K562 (cell line): ENCODE measurements at regions of chr9 and their contacts with region 1.

Region 1: DNA sequence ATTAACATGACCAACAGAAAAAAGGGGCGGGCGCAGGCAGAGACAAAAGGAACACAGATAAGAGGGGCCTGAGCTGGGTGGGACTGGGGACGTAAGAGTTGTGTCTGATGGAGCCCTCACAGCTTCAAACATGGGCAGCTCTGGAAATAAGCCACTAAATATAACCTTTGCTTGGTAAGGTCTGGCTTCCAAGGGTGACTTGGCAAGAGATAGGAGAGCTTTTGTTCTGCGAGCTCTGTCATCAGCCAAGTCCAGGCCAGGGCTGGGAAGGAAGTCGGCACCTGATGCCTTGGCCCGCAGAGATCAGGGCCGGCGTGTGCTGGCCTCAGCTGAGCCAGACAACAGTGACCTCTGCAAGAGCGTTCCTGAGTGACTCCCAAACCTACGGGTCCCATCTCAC is 11.8 kb downstream of the TRUB2 start:
- DNase-seq: no peak
- ATAC-seq: no peak
- H3K4me3 ChIP-seq: no peak overlapping the region
- H3K27ac ChIP-seq: peak overlapping the region; percentile 13; the same call in 2 of the 3 replicates
- H3K4me1 ChIP-seq: peaks cover 28 to 30% of the 10 kb centered on the region in 2 experiments
- H3K27me3 ChIP-seq: no peaks in the 10 kb centered on the region
- CTCF ChIP-seq: no peak
- EP300 ChIP-seq: no peak
- POLR2A ChIP-seq: no peak
- RAD21 ChIP-seq: no peak

Region 2: DNA sequence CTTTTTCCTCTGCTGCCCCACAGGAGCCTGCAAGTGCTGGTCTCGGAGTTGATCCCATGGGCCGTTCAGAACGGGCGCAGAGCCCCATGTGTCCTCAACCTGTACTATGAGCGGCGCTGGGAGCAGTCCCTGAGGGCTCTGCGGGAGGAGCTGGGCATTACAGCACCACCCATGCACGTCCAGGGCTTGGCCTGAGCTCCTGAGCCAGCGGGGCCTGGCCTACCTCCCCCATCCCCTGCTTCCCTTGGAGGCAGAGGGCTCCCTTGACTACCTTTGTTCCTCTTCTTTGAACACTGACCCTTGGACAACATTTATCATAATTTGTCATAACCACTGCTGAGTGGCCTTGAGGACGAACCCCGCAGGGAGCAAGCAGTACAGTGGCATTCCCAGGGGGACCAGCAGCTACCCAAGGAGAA is 23.0 kb after region 1 on chr9:
- CTCF ChIA-PET with region 1: no interaction called
- POLR2A ChIA-PET with region 1: interaction called, 19 read pairs
- in situ Hi-C with region 1: no loop called
- intact Hi-C with region 1: no loop called
- DNase-seq: peak in 3 of 4 experiments; percentile 21 to 31 (median 29)
- ATAC-seq: no peak; the same call in 2 of the 3 replicates
- H3K4me3 ChIP-seq: no peak overlapping the region
- H3K27ac ChIP-seq: no peak overlapping the region
- H3K4me1 ChIP-seq: peaks cover 5 to 17% of the 10 kb centered on the region in 2 experiments; a peak in 4 of 5 replicates
- H3K27me3 ChIP-seq: no peaks in the 10 kb centered on the region
- CTCF ChIP-seq: no peak
- EP300 ChIP-seq: no peak
- POLR2A ChIP-seq: no peak
- RAD21 ChIP-seq: no peak